ENCODE measurements at regions of chr16 and their contacts with region 1.

Region 1: DNA sequence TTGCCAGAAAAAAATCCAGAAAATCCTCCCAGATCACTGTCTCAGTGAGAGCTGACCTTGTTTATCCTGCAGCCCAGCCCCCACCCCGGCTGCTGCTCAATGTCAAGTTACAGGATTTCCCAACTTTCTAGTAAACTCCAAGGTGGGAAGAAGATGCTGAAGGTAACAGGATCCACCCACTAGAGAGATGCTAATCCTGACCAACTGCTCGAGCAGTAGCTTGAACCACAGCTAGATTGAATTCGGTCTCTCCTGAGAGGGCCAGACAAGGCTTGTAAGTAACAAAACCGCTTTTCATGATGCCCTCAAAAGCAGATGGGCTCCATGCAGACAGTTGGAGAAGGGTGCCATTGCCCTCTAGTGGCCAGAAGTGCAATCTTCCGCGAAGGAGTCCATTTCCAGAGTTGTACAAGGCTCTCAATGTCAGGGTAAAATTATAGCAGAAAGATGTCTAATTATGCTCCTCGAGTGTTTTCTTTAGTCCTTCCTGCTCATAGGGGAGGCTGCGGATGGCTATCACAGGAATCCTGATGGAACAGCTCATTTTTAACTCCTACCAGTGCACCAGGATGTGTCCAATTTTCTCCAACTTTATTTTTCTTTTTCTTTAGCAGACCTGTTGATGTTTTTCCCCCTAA is 3.9 kb downstream of the CDH11 start:
- DNase-seq: peak; percentile 52
- H3K4me3 Mint-ChIP-seq: no peak overlapping the region
- H3K27ac Mint-ChIP-seq: no peak overlapping the region
- H3K4me1 Mint-ChIP-seq: no peaks in the 10 kb centered on the region
- H3K27me3 Mint-ChIP-seq: peaks cover 24% of the 10 kb centered on the region

Region 2: GRCh38 chr16:63361032-63361624 is 1756.8 kb before region 1 on chr16:
- CTCF ChIA-PET with region 1: no interaction called
- POLR2A ChIA-PET with region 1: no interaction called
- intact Hi-C with region 1: loop called (anchors 2 kb)
- DNase-seq: no peak
- H3K4me3 Mint-ChIP-seq: no peak overlapping the region
- H3K27ac Mint-ChIP-seq: no peak overlapping the region
- H3K4me1 Mint-ChIP-seq: no peaks in the 10 kb centered on the region
- H3K27me3 Mint-ChIP-seq: no peaks in the 10 kb centered on the region

Region 3: GRCh38 chr16:64159976-64160375 is 958.0 kb before region 1 on chr16:
- CTCF ChIA-PET with region 1: no interaction called
- POLR2A ChIA-PET with region 1: no interaction called
- intact Hi-C with region 1: loop called (anchors 10 kb)
- DNase-seq: no peak
- H3K4me3 Mint-ChIP-seq: no peak overlapping the region
- H3K27ac Mint-ChIP-seq: no peak overlapping the region
- H3K4me1 Mint-ChIP-seq: no peaks in the 10 kb centered on the region
- H3K27me3 Mint-ChIP-seq: no peaks in the 10 kb centered on the region

Region 4: DNA sequence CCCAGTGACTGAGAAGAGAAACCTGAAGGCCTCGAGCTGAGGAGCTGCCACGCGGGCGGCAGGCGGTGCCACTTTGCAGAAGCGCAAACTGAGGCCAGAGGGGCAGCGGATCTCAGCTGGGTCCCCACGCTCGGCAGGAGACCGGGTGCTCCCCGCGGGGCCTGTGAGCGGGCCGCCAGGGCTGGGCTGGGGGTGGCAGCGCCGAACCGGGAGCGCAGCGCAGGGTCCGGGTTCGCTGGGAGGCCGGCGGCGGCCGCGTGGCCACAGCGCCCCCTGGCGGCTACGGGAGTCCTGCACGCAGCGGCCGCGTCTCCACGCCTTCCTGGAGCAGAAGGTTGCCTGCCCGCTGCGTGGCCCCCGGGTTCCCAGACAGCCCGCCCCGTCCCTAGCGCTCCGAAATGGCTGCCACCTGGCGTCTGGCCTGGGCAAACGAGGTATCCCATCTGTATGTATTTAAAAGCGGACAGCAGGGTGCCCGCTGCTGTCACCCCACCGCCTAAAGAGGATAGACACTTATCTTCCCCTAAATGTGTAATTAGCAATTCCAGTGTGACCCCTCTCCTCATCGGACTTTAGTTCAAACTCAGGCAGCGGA is 1152.5 kb after region 1 on chr16:
- CTCF ChIA-PET with region 1: no interaction called
- POLR2A ChIA-PET with region 1: no interaction called
- intact Hi-C with region 1: loop called (anchors 10 kb)
- DNase-seq: peak; percentile 65
- H3K4me3 Mint-ChIP-seq: no peak overlapping the region
- H3K27ac Mint-ChIP-seq: no peak overlapping the region
- H3K4me1 Mint-ChIP-seq: peaks cover 11% of the 10 kb centered on the region
- H3K27me3 Mint-ChIP-seq: peaks cover 20% of the 10 kb centered on the region

Measured in activated CD4-positive, alpha-beta memory T cell treated with anti-CD3 and anti-CD28 coated beads for 36 hours (primary cell).